ENCODE measurements at regions of chr17 and their contacts with region 1.

Region 1: DNA sequence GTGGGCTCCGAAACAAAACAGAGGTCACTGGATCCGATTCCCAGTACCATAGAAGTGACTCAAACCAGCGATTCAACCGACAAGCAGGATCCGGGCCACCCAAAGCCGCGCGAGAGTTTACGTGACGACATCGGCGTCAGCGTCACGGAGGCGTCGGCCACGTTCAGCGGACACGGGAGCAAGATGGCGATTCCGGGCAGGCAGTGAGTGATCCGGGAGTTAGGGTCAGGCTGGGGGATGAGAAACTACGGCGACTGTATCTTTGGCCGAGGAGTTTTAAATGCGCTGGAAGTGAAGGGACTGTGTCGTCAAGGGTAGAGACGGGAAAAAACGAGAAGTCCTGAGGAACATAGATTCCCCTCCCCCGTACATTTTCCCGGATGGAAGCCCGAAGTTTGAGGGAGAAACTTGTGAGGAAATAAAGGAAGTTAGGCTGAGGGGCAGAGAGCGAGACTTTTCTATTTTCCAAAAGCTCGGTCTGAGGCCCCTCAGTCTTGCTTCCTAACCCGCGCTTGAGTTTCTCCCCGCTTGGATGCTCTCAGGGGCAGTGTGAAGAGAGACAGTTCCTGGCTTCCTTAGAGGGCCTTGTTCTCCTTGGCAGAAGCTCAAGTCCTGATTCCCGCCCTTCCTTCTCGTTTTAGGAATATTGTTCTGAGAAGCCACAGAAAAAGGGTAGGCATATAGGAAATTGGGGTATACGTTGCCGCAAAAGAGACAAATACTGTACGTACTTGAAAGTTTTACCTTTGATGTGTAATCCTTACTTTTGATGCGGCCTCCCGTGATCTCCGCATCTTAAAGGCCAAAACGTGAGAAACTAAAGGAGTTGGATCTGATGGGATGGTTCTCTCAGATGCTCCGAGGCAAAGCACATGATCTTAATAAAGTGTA is at the start of gene NSRP1:
- DNase-seq: peak; percentile 98 to 99
- ATAC-seq: peak; percentile 98
- H3K4me3 ChIP-seq: peak within 1 kb of the TSS; percentile 85 to 100
- H3K27ac ChIP-seq: peak within 1 kb of the TSS; percentile 91 to 100
- H3K4me1 ChIP-seq: no peaks in the 10 kb centered on the region
- H3K27me3 ChIP-seq: no peaks in the 10 kb centered on the region
- total RNA-seq, gene NSRP1: 59.9 to 60.0 TPM

Region 2: DNA sequence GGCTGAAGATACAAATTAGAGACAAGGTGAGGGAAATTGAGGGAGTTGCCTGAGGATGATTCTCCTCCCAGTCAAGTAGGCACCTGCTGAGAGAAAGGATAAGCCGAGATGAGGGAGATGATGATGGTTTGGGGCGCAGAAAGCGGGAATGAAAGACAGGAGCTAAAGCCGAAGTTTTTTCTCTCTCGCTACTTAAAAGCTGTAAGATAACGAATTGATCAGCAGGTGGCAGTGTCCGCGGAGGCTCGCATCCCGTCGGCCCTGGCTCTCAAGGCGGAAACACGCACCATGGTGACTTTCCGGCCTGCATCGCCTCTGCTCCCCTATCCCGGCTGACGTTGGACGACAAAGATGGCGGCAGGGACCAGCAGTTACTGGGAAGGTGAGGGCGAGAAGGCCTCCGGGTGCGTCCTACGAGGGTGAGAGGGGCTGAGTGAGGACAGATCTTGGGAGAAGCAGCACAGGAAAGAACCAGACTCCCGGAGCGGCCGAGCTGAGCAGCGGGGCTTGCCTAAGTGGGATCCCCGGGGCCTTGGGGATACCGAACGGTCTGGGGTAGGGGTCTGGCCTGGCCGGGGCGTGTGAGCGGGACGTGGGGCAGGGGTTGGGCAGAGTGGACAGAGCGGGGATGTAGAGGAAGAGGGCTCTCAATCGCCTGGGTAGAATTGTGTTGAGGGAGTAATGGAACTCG is 360.3 kb after region 1 on chr17 and contains the start of gene GOSR1:
- intact Hi-C with region 1: loop called in 1 of 2 experiments (anchors 5 kb)
- DNase-seq: peak; percentile 96
- ATAC-seq: peak; percentile 99
- H3K4me3 ChIP-seq: peak within 1 kb of the TSS; percentile 83 to 95
- H3K27ac ChIP-seq: peak within 1 kb of the TSS; percentile 71 to 93
- H3K4me1 ChIP-seq: no peaks in the 10 kb centered on the region
- H3K27me3 ChIP-seq: no peaks in the 10 kb centered on the region
- total RNA-seq, gene GOSR1: 53.8 to 55.7 TPM